ENCODE measurements at regions of chr12 and their contacts with region 1.

Region 1: GRCh38 chr12:105876396-105876927 is 262.3 kb downstream of the NUAK1 start:
- DNase-seq: no peak
- H3K4me3 ChIP-seq: no peak overlapping the region
- H3K27me3 ChIP-seq: no peaks in the 10 kb centered on the region
- CTCF ChIP-seq: no peak

Region 2: GRCh38 chr12:105705765-105706164 is 170.7 kb before region 1 on chr12:
- CTCF ChIA-PET with region 1: no interaction called
- POLR2A ChIA-PET with region 1: interaction called, 16 read pairs
- DNase-seq: peak; percentile 6
- H3K4me3 ChIP-seq: no peak overlapping the region
- H3K27me3 ChIP-seq: no peaks in the 10 kb centered on the region
- CTCF ChIP-seq: peak; percentile 78

Region 3: GRCh38 chr12:105798256-105798845 is 78.1 kb before region 1 on chr12:
- CTCF ChIA-PET with region 1: no interaction called
- POLR2A ChIA-PET with region 1: no interaction called
- DNase-seq: no peak
- H3K4me3 ChIP-seq: no peak overlapping the region
- H3K27me3 ChIP-seq: no peaks in the 10 kb centered on the region
- CTCF ChIP-seq: no peak